ENCODE measurements at regions of chr17 and their contacts with region 1.

Region 1: DNA sequence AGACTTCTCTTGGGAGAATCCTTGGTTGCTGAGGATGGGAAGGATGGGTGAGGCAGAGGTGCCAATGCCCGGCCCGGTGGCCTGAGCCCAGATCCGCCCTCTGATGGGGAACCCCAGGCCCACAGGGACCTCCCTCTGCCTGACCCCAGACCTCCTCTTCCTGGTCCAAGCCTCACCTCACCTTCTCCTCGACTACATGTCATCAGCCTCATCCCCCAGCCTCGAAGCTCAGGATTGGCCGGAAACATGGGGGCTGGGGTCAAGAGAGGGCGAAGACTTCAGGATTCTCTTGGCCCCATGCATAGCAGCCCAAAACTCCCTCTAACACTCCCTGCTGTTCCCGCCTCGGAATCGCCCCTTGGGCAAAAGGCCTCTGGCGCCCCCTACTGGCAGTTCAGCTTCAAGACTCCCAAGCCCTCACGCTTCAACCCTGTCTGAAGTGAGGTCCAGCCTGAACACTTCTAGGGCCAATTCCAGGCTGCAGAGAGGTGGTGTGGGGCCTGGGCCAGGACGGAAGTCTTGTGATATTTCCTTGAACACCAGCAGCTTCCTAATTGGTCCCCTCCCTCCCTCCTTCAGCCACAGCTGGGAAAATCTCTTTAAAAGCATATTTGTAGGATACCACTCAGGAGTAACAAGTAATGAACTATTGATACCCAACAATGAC is 47.2 kb downstream of the ARHGAP27 start:
- DNase-seq: peak; percentile 80 to 99
- H3K4me3 ChIP-seq: no peak overlapping the region
- H3K27ac ChIP-seq: no peak overlapping the region
- H3K4me1 ChIP-seq: peaks cover 0 to 13% (median 8%) of the 10 kb centered on the region in 4 experiments; a peak in 3 of 7 replicates
- H3K27me3 ChIP-seq: 0 out of 7 replicates have a peak, but pooled peaks cover 0 to 3% (median 0%) of the 10 kb centered on the region in 4 experiments
- CTCF ChIP-seq: peak; percentile 90 to 98 (median 98)
- EP300 ChIP-seq: no peak
- POLR2A ChIP-seq: no peak
- RAD21 ChIP-seq: peak; percentile 99

Region 2: DNA sequence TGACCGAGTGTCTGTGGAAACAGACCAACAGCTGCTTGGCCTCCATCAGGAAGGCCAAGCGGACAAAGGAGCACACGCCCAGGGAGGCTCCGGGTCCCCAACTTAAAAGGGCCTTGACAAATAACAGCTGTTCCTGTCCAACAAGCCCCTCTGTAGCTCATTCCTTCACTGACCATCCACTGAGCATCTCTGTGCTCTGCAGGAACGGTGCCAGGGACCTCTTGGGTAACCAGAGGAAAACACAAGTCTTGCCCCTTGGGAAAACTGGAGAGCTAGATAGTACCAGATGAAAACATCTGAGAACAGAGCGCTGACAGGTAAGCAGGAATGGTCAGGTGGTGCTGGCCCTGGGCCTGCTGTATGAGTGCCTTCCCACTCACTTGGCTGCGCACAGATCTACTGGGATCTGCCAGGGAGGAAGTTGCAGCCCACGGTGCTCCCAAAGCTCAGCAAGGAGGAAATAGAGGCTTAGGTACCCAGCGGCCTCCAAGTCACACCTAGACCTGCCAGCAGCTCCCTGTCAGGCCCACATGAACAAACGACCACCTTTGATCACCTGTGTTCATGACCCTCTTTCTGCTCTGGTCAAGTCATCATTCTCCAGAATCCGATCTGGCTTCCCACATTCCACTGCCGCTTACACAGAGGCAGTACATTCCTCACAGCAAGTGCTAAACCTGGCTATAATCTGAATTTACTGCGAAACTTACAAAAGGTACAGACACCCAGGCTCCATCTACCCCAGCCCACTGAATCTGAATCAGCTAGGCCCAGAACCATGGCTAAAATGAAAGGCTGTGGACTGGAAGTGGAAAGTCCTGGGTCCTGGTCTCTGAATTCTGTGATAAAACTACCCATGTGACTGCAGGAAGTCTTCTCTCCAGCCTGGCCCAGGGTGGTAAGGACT is 346.5 kb before region 1 on chr17:
- CTCF ChIA-PET with region 1: no interaction called
- POLR2A ChIA-PET with region 1: no interaction called
- DNase-seq: no peak
- H3K4me3 ChIP-seq: no peak overlapping the region
- H3K27ac ChIP-seq: no peak overlapping the region
- H3K4me1 ChIP-seq: peaks cover 4 to 11% (median 7%) of the 10 kb centered on the region in 4 experiments
- H3K27me3 ChIP-seq: no peaks in the 10 kb centered on the region
- CTCF ChIP-seq: no peak
- EP300 ChIP-seq: no peak
- POLR2A ChIP-seq: no peak
- RAD21 ChIP-seq: no peak

Region 3: DNA sequence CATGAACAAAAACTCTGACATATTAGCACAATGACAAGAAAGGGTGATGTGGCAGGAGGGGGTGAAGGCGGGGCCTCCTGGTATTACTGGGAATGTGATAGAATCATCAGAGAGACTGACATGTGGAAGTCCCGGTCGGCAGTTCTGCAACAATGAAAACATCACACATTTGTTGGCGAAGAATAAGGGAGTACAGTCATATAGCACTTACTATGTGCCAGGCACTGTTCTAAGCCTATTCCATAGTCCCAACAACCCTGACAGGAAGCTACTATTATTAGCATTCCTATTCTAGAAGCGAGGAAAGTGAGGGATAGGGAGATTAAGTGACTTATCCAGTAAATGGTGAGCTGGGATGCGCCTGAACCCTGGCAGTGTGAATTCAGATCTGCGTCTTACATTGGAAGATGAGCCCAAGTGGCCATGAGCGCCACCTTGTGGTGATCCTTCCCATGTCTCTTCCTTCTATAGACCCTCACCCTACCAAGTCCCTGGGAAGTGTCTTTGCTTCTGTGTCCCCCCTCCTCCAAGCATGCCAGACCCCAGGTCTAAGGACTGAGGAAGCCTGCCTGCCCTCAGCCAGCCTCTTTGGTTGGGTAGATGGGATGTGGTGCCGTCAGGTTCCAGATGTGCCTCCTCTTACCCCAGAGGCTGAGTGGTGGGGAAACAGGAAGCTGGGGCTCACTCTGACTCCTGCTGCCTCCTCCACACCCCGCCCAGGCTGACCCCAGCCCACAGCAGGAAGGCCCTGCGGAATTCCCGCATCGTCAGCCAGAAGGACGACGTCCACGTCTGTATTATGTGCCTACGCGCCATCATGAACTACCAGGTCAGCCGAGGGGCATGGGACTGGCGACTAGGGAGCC is 149.8 kb before region 1 on chr17:
- CTCF ChIA-PET with region 1: interaction called, 16 read pairs
- POLR2A ChIA-PET with region 1: interaction called, 3 read pairs
- DNase-seq: peak; percentile 80 to 92
- H3K4me3 ChIP-seq: 0 out of 8 replicates have a peak overlapping the region, but pooled peaks of 1 of the 4 experiments have one; percentile 12
- H3K27ac ChIP-seq: no peak overlapping the region
- H3K4me1 ChIP-seq: peaks cover 3 to 20% (median 10%) of the 10 kb centered on the region in 4 experiments
- H3K27me3 ChIP-seq: peaks cover 0 to 26% (median 12%) of the 10 kb centered on the region in 4 experiments; a peak in 6 of 7 replicates
- CTCF ChIP-seq: peak; percentile 81 to 95 (median 82)
- EP300 ChIP-seq: no peak
- POLR2A ChIP-seq: no peak
- RAD21 ChIP-seq: peak; percentile 47 to 63; a peak in 3 of 4 replicates

Region 4: GRCh38 chr17:45256114-45256966 is 129.1 kb before region 1 on chr17:
- CTCF ChIA-PET with region 1: interaction called, 14 read pairs
- POLR2A ChIA-PET with region 1: no interaction called
- DNase-seq: no peak
- H3K4me3 ChIP-seq: peak overlapping the region in 1 of 4 experiments; percentile 34; a peak in 1 of 8 replicates
- H3K27ac ChIP-seq: no peak overlapping the region
- H3K4me1 ChIP-seq: peaks cover 0 to 14% (median 5%) of the 10 kb centered on the region in 4 experiments; a peak in 6 of 7 replicates
- H3K27me3 ChIP-seq: peaks cover 0 to 5% (median 2%) of the 10 kb centered on the region in 4 experiments; a peak in 3 of 7 replicates
- CTCF ChIP-seq: peak; percentile 6 to 19 (median 7); a peak in 2 of 4 replicates
- EP300 ChIP-seq: no peak
- POLR2A ChIP-seq: no peak
- RAD21 ChIP-seq: 0 out of 4 replicates have a peak, but pooled peaks of 1 of the 2 experiments have one; percentile 3

Region 5: DNA sequence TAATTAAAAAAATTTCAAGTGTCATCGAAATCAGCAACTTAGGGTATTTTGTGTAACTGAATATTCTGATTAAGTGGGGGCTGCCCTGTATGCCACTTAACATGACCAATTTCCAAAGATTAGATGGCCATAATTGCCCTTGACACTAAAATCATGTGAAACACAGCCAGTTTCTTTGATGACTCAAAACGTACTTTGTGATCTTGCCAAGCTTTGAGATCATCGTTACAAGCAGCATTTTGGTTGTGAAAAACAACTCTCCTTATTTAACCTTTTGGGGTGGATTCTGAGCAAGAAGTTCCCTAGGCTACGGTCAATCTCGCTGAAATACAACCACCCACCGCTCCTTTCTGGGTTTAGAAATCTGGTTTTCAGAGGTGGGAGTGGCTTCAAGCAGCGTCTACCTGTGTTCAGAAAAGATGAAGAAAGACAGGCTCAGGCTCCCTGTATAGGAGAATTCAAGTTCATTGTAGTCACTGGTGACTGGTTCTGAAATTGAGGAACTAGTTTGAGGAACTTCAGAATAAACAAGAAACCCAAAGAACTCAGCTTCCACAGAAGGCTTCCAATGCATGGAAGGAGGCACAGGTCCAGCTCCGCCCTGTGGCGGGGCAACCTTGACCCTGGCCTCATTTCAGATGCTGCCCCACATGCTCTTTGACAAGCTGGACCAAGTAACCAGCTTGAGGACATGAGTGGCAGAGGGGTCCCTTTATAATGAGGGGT is 78.0 kb before region 1 on chr17:
- CTCF ChIA-PET with region 1: interaction called, 10 read pairs
- POLR2A ChIA-PET with region 1: no interaction called
- DNase-seq: no peak
- H3K4me3 ChIP-seq: no peak overlapping the region
- H3K27ac ChIP-seq: no peak overlapping the region
- H3K4me1 ChIP-seq: peaks cover 0 to 3% (median 2%) of the 10 kb centered on the region in 4 experiments
- H3K27me3 ChIP-seq: no peaks in the 10 kb centered on the region; a peak in 1 of 7 replicates
- CTCF ChIP-seq: no peak
- EP300 ChIP-seq: no peak
- POLR2A ChIP-seq: no peak
- RAD21 ChIP-seq: no peak

Region 6: DNA sequence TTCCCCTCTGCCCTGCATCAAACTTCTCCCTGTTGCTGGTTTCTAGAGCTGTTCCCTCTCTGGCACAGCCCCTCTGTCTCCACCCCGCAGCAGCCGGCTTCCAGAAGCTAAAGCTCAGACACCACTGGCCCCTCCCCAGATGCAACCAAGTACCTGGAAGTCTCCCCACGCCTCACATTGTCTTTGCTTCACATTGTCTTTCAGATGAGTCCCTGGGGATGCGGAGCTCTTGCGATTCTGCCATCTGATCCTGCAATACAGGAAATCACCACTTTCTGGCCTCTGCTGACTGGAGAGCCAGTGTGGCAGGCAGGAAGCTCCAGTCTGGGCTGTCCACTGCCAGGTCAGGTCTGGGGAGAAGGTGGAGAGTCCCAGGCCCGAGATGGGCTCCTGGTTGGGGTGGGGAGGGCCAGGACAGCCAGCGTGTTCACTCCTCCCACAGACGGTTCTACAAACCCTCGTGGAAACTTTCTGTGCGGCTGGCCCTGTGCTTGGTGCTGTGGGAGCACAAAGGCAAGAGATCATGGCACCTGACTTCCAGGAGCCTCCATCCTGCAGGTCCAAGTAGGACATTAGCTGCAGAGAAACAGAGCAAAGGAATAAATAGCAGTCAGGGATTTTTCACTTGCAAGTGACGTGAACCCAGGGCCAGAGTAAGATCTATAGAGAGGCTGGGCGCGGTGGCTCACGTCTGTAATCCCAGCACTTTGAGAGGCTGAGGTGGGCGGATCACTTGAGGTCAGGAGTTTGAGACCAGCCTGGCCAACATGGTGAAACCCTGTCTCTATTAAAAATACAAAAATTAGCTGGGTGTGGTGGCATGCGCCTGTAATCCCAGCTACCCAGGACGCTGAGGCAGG is 20.7 kb before region 1 on chr17:
- CTCF ChIA-PET with region 1: interaction called, 14 read pairs
- POLR2A ChIA-PET with region 1: interaction called, 4 read pairs
- DNase-seq: peak; percentile 75 to 89
- H3K4me3 ChIP-seq: peak overlapping the region in 1 of 4 experiments; percentile 36; a peak in 1 of 8 replicates
- H3K27ac ChIP-seq: peak overlapping the region; percentile 84; the same call in 1 of the 2 replicates
- H3K4me1 ChIP-seq: peaks cover 5 to 18% (median 10%) of the 10 kb centered on the region in 4 experiments
- H3K27me3 ChIP-seq: no peaks in the 10 kb centered on the region; a peak in 2 of 7 replicates
- CTCF ChIP-seq: peak in 1 of 3 experiments; percentile 31; a peak in 1 of 4 replicates
- EP300 ChIP-seq: peak in 1 of 2 experiments; percentile 30; a peak in 1 of 3 replicates
- POLR2A ChIP-seq: peak; percentile 42 to 62
- RAD21 ChIP-seq: peak; percentile 10 to 33; a peak in 2 of 4 replicates